ENCODE measurements at regions of chr16 and their contacts with region 1.

Region 1: DNA sequence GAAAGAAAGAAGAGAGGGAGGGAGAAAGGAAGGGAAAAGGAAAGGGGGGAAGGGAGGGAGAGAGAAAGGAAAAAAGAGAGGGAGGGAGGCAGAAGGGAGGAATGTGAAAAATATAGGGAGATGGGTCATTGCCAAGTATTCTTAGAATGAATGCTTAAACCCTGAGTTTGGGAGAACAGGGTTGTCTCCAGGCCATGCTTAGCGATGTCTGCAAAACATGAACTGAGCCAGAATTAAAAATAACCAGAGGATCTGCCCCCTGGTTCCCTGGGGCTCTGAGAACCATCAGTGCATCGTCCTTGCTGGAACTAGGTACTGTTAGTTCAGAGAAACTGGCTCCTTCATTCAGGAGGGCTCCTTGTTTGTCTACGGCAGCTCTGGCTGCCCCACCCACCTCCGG is 170.4 kb downstream of the IRX5 start:
- DNase-seq: no peak
- H3K4me3 ChIP-seq: no peak overlapping the region
- H3K27ac ChIP-seq: no peak overlapping the region
- H3K4me1 ChIP-seq: no peaks in the 10 kb centered on the region
- H3K27me3 ChIP-seq: no peaks in the 10 kb centered on the region
- CTCF ChIP-seq: no peak
- POLR2A ChIP-seq: no peak

Region 2: DNA sequence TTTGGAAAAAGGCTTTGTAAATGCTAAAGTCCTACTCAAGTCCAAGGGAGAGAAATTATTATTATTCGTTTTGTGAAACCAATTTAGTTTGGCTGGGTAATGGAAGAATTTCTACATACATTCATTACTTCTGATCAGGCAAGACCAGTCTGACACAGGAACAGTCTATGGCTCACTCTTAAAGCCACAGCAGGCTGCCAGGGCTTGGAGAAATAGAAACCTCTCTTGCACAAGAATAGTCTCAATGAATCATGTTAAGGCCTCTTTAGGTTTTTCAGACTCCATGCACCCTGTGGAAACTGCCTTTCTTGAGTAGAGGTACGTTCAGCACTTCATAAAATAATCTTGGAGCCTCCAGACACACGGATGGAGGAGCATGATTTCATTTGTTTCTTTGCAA is 982.2 kb before region 1 on chr16:
- intact Hi-C with region 1: loop called (anchors 5 kb)
- DNase-seq: no peak
- H3K4me3 ChIP-seq: no peak overlapping the region
- H3K27ac ChIP-seq: no peak overlapping the region
- H3K4me1 ChIP-seq: no peaks in the 10 kb centered on the region
- H3K27me3 ChIP-seq: no peaks in the 10 kb centered on the region
- CTCF ChIP-seq: no peak
- POLR2A ChIP-seq: no peak

Region 3: DNA sequence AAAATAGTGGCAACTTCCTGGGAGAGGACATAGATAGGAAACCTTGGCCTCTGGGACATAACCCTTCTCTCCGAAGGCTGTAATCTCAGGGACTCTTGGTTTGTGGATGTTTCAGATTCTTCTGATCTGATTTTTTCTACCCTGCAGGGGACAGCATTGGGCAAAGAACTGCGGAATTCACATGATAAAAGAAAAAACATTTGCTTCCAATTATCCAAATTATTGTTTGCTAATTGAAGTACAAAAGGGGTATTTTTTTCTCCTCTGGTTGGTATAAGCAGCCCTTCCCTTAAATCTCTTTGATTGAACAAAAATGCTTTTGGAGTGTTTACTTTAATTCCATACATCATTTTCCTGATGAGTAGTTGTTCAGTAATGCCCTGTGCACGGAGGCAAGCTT is 562.8 kb before region 1 on chr16:
- intact Hi-C with region 1: no loop called
- DNase-seq: no peak
- H3K4me3 ChIP-seq: no peak overlapping the region
- H3K27ac ChIP-seq: no peak overlapping the region
- H3K4me1 ChIP-seq: no peaks in the 10 kb centered on the region
- H3K27me3 ChIP-seq: no peaks in the 10 kb centered on the region
- CTCF ChIP-seq: no peak
- POLR2A ChIP-seq: no peak

Region 4: GRCh38 chr16:54780266-54780665 is 320.8 kb before region 1 on chr16:
- intact Hi-C with region 1: no loop called
- DNase-seq: no peak
- H3K4me3 ChIP-seq: no peak overlapping the region
- H3K27ac ChIP-seq: no peak overlapping the region
- H3K4me1 ChIP-seq: no peaks in the 10 kb centered on the region
- H3K27me3 ChIP-seq: no peaks in the 10 kb centered on the region
- CTCF ChIP-seq: no peak
- POLR2A ChIP-seq: no peak

Region 5: DNA sequence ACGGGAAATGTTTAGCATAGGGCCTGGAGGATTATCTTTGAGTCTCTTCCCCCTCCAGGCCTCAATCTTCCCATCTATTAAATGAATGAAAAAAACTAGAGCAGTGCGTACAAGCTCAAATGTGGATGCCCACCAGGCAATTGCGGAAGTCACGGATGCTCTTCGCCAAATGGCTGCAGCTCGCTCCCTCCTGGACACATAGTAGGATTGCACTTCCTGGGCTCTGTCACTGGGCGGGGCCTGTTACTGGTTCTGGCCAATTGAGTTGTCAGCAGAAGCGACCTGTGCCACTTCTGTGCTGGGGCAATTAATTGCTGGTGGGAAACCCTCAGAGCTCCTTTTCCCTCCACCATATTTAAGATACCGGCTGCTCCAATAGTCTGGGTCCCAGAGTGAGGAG is 54.8 kb after region 1 on chr16:
- intact Hi-C with region 1: no loop called
- DNase-seq: no peak
- H3K4me3 ChIP-seq: no peak overlapping the region
- H3K27ac ChIP-seq: no peak overlapping the region
- H3K4me1 ChIP-seq: no peaks in the 10 kb centered on the region
- H3K27me3 ChIP-seq: no peaks in the 10 kb centered on the region
- CTCF ChIP-seq: no peak
- POLR2A ChIP-seq: no peak

Measured in testis (tissue), 5 donors.